OCI-LY7 (cell line): ENCODE measurements at regions of chr22 and their contacts with region 1.

Region 1: GRCh38 chr22:19629720-19630419 is 84.4 kb upstream of the SEPTIN5 start:
- DNase-seq: peak; percentile 86
- H3K4me3 ChIP-seq: no peak overlapping the region
- H3K27ac ChIP-seq: no peak overlapping the region
- H3K4me1 ChIP-seq: no peaks in the 10 kb centered on the region
- CTCF ChIP-seq: peak; percentile 98

Region 2: GRCh38 chr22:19291580-19292457 is 338.1 kb before region 1 on chr22 and contains the start of gene CLTCL1:
- CTCF ChIA-PET with region 1: no interaction called
- POLR2A ChIA-PET with region 1: no interaction called
- intact Hi-C with region 1: loop called (anchors 5 kb)
- DNase-seq: peak; percentile 82
- H3K4me3 ChIP-seq: peak within 1 kb of the TSS; percentile 74
- H3K27ac ChIP-seq: no peak within 1 kb of the TSS
- H3K4me1 ChIP-seq: peaks cover 16% of the 10 kb centered on the region
- CTCF ChIP-seq: no peak
- total RNA-seq, gene CLTCL1: 0.31 and 0.44 TPM in 2 replicates

Region 3: GRCh38 chr22:19495562-19496323 is 134.1 kb before region 1 on chr22:
- CTCF ChIA-PET with region 1: no interaction called
- POLR2A ChIA-PET with region 1: no interaction called
- intact Hi-C with region 1: loop called (anchors 5 kb)
- DNase-seq: peak; percentile 40
- H3K4me3 ChIP-seq: no peak overlapping the region
- H3K27ac ChIP-seq: no peak overlapping the region
- H3K4me1 ChIP-seq: no peaks in the 10 kb centered on the region
- CTCF ChIP-seq: 0 out of 2 replicates have a peak, but pooled peaks have one; percentile 29